Keratinocyte (primary cell): ENCODE measurements at regions of chr7 and their contacts with region 1.

Region 1: GRCh38 chr7:47536661-47537611 is 45.0 kb downstream of the TNS3 start:
- DNase-seq: no peak
- H3K4me3 ChIP-seq: peak overlapping the region; percentile 11 to 29 (median 20)
- H3K27ac ChIP-seq: no peak overlapping the region
- H3K4me1 ChIP-seq: peaks cover 32% of the 10 kb centered on the region
- H3K27me3 ChIP-seq: peaks cover 21% of the 10 kb centered on the region
- CTCF ChIP-seq: no peak

Region 2: GRCh38 chr7:47435889-47436312 is 101.0 kb before region 1 on chr7:
- dilution Hi-C with region 1: loop called (anchors 25 kb)
- DNase-seq: no peak
- H3K4me3 ChIP-seq: no peak overlapping the region
- H3K27ac ChIP-seq: no peak overlapping the region
- H3K4me1 ChIP-seq: peaks cover 16% of the 10 kb centered on the region
- H3K27me3 ChIP-seq: no peaks in the 10 kb centered on the region
- CTCF ChIP-seq: peak; percentile 59 to 84 (median 65)

Region 3: DNA sequence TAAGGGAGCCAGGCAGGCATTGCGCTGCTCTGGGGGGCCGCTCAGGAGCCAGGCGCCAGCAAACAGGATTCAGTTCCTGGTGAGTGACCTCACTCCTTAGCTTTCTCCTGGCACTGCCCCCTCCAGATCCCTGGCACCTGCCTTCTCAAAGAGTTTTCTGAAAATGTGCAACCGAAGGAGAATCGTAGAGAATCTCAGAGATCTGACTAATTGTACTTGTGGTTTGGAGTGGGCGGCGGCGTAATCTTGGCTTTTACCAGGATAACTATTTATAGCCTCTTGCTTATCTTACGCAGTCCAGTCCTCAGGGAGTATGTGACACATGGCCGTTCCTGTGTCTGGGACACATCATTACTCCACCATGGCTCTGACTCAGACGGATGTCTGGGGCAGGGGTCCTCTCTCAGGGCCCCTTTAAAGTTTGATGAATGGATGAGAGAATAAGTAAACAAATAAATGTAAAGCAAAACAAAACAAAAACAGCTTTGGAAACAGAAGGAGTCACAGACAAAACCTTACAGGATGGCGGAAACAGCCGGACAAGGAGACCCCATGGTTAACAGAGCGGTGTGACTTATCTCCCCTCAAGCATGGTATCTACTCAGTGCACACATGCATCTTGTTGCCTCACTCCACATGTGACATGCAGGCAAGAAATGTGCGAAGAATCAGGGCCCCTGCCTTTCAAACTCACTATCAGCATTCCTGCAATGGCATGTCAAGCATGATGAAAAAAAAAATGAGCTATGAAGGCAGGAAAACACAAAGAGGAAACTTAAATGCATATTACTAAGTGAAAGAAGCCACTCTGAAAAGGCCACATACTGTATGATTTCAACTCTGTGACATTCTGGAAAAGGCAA is 54.7 kb before region 1 on chr7:
- dilution Hi-C with region 1: loop called (anchors 10 kb)
- DNase-seq: no peak
- H3K4me3 ChIP-seq: no peak overlapping the region
- H3K27ac ChIP-seq: no peak overlapping the region
- H3K4me1 ChIP-seq: no peaks in the 10 kb centered on the region
- H3K27me3 ChIP-seq: no peaks in the 10 kb centered on the region
- CTCF ChIP-seq: no peak

Region 4: GRCh38 chr7:47795631-47796030 is 258.7 kb after region 1 on chr7:
- dilution Hi-C with region 1: no loop called
- DNase-seq: no peak
- H3K4me3 ChIP-seq: no peak overlapping the region
- H3K27ac ChIP-seq: no peak overlapping the region
- H3K4me1 ChIP-seq: no peaks in the 10 kb centered on the region
- H3K27me3 ChIP-seq: no peaks in the 10 kb centered on the region
- CTCF ChIP-seq: no peak